Dendritic cell treated with granulocyte-macrophage colony-stimulating factor and Interleukin-4, amounts not matched to agents 40 ng/mL and 50 ng/mL, for 4 days (primary cell): ENCODE measurements at regions of chr3 and their contacts with region 1.

Region 1: DNA sequence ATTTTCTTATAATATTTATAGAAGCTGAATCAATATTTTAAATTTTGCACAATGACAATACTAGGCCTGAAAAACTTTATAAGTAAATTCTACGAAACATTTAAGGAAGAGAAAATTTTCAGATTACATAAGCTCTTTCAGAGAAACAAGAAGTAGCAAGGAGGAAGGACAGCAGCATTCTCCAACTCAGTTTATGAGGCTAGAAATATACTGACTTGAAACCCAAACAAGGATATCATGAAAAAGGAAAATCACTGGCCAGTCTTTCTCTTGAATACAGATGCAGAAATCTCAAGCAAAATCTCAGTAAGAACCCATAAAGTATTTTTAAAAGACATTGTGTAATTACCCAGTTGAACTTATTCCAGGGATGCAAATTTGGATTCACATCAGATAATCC is 121.3 kb downstream of the STAC start:
- H3K4me3 Mint-ChIP-seq: no peak overlapping the region
- H3K27ac Mint-ChIP-seq: peak overlapping the region; percentile 83
- H3K4me1 Mint-ChIP-seq: peaks cover 36% of the 10 kb centered on the region
- H3K27me3 Mint-ChIP-seq: no peaks in the 10 kb centered on the region

Region 2: DNA sequence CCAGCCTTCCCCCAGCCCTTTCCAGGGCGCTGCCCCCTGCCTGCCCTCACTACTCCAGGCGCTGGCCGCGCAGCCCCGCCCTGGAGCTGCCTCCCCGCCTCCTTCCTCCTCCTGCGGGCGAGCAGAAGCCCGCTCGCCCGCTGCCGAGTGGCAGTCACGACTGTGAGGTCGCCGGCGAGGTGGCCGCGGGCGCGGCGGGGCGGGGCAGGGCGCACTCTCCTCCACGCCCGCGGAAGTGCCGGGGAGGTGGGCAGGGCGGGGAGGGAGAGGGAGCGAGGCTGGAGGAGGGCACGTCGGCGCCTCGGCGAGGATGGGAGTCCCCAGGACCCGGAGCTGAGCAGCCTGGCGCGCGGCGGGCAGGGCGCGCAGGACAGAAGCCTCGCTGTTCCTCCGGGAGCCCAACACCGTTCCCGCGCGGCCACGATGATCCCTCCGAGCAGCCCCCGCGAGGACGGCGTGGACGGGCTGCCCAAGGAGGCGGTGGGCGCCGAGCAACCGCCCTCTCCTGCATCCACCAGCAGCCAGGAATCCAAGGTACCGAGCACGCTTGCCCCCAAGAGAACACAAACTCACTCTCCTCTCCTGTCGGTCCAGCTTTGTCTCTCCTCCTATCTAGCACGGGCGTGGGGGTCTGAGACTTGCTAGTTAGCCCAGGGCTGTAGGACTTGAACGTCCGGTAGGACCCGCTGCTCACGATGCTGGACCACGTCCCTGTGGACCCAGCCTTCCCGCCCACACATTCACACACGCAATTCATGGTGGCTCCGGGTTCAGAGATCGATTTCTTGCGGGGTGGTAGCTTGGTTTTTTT is 121.2 kb before region 1 on chr3 and contains the start of gene STAC:
- intact Hi-C with region 1: loop called (anchors 10 kb)
- H3K4me3 Mint-ChIP-seq: peak within 1 kb of the TSS; percentile 96
- H3K27ac Mint-ChIP-seq: peak within 1 kb of the TSS; percentile 88
- H3K4me1 Mint-ChIP-seq: peaks cover 38% of the 10 kb centered on the region
- H3K27me3 Mint-ChIP-seq: peaks cover 2% of the 10 kb centered on the region

Region 3: GRCh38 chr3:37197810-37198371 is 696.3 kb after region 1 on chr3:
- intact Hi-C with region 1: no loop called
- H3K4me3 Mint-ChIP-seq: no peak overlapping the region
- H3K27ac Mint-ChIP-seq: no peak overlapping the region
- H3K4me1 Mint-ChIP-seq: no peaks in the 10 kb centered on the region
- H3K27me3 Mint-ChIP-seq: no peaks in the 10 kb centered on the region